Caco-2 (cell line): ENCODE measurements at regions of chr6 and their contacts with region 1.

Region 1: DNA sequence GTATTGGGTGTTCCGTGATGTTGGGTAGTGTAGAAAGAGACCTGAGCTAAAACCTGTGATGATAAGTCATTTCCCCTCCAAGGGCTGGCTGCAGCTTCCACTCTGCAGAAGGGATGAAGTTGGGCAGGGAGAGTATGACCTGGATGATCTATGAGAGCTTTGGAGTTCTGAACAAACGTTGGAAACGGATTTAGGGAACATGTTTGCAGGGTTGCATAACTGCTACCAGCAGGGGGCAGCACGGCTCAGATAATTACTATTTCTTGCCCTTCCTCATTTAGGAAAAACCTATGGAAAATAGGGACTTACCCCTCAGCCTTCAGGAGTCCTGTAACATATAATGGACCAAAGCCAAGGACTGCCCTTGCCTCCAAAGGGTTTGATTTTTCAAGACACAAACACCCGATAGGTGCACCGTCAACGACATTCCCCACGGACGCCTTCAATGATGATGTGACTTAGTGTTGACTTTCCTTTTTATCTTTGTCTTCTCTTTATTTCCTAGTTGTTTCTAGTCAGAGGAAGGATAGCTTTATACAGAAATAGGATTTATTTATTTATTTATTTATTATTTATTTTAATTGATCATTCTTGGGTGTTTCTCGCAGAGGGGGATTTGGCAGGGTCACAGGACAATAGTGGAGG is 164.9 kb upstream of the SASH1 start:
- DNase-seq: peak; percentile 45 to 69
- H3K4me3 ChIP-seq: no peak overlapping the region
- H3K4me3 Mint-ChIP-seq: no peak overlapping the region
- H3K27ac Mint-ChIP-seq: no peak overlapping the region
- H3K4me1 ChIP-seq: no peaks in the 10 kb centered on the region
- H3K4me1 Mint-ChIP-seq: no peaks in the 10 kb centered on the region
- H3K27me3 ChIP-seq: no peaks in the 10 kb centered on the region
- H3K27me3 Mint-ChIP-seq: no peaks in the 10 kb centered on the region
- CTCF ChIP-seq: peak; percentile 64 to 78

Region 2: DNA sequence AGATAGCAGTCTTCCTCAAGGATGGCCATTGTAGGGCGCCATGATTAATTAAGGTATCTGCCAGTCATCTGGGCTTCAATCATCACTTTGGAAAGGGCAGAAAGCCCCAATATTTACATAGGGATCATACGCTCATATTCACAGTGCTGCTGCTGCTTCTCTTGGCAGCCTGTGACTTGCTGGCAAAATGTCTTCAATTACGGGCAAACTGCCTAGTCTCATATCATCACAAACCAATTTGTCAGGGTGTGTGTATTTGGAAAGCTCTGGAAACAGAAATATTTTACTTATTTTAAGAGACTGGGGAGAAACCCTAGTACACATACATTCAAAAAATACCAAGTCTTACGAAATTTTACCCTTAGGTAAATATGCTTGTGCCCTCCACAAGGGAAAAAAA is 591.7 kb before region 1 on chr6:
- CTCF ChIA-PET with region 1: no interaction called
- POLR2A ChIA-PET with region 1: no interaction called
- intact Hi-C with region 1: no loop called
- DNase-seq: no peak
- H3K4me3 ChIP-seq: no peak overlapping the region
- H3K4me3 Mint-ChIP-seq: no peak overlapping the region
- H3K27ac Mint-ChIP-seq: no peak overlapping the region
- H3K4me1 ChIP-seq: no peaks in the 10 kb centered on the region
- H3K4me1 Mint-ChIP-seq: peaks cover 7% of the 10 kb centered on the region
- H3K27me3 ChIP-seq: no peaks in the 10 kb centered on the region
- H3K27me3 Mint-ChIP-seq: no peaks in the 10 kb centered on the region
- CTCF ChIP-seq: no peak

Region 3: DNA sequence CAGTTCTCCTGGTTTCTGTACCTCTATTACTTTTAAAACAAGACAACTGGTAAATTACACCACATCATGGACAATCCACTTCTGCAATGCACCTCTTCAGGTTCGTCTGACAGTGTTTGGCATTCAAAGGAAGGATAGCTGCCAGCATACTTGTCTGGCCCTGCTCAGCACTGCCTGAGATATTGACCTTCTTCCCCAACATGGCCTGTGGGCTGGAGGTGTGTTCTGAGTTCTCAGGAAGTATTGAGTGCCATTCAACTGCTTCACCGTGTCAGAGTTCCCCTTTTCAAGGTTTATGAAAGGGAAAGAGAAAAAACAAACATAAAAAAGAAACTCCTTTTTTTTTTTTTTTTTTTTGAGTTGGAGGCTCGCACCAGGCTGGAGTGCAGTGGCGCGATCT is 103.0 kb before region 1 on chr6:
- CTCF ChIA-PET with region 1: no interaction called
- POLR2A ChIA-PET with region 1: no interaction called
- intact Hi-C with region 1: no loop called
- DNase-seq: no peak
- H3K4me3 ChIP-seq: no peak overlapping the region
- H3K4me3 Mint-ChIP-seq: no peak overlapping the region
- H3K27ac Mint-ChIP-seq: no peak overlapping the region
- H3K4me1 ChIP-seq: no peaks in the 10 kb centered on the region
- H3K4me1 Mint-ChIP-seq: peaks cover 6% of the 10 kb centered on the region
- H3K27me3 ChIP-seq: no peaks in the 10 kb centered on the region
- H3K27me3 Mint-ChIP-seq: no peaks in the 10 kb centered on the region
- CTCF ChIP-seq: no peak

Region 4: DNA sequence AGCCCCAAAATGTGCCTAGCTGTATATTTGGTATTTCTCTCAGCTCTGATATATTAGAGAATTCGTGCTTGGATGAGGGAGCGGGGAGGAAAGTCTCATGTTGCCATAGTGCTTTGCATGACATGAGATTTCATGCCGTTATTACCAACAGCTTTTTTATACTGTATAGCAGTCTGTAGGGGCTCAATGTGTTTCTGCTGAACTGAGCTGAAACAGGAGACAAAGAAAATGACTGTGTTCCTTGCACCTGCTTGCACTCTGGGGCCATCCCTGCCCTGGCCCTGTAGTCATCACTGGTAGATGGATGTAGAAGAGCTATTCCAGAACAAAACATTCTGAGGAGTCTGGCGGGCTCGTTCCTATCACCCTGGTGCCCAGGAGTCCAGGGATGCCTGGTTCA is 37.0 kb after region 1 on chr6:
- CTCF ChIA-PET with region 1: no interaction called
- POLR2A ChIA-PET with region 1: no interaction called
- intact Hi-C with region 1: no loop called
- DNase-seq: no peak
- H3K4me3 ChIP-seq: no peak overlapping the region
- H3K4me3 Mint-ChIP-seq: no peak overlapping the region
- H3K27ac Mint-ChIP-seq: no peak overlapping the region
- H3K4me1 ChIP-seq: peaks cover 15% of the 10 kb centered on the region
- H3K4me1 Mint-ChIP-seq: peaks cover 9% of the 10 kb centered on the region
- H3K27me3 ChIP-seq: no peaks in the 10 kb centered on the region
- H3K27me3 Mint-ChIP-seq: no peaks in the 10 kb centered on the region
- CTCF ChIP-seq: no peak

Region 5: GRCh38 chr6:148231572-148231971 is 53.9 kb after region 1 on chr6:
- CTCF ChIA-PET with region 1: no interaction called
- POLR2A ChIA-PET with region 1: no interaction called
- intact Hi-C with region 1: no loop called
- DNase-seq: no peak
- H3K4me3 ChIP-seq: no peak overlapping the region
- H3K4me3 Mint-ChIP-seq: no peak overlapping the region
- H3K27ac Mint-ChIP-seq: no peak overlapping the region
- H3K4me1 ChIP-seq: no peaks in the 10 kb centered on the region
- H3K4me1 Mint-ChIP-seq: no peaks in the 10 kb centered on the region
- H3K27me3 ChIP-seq: no peaks in the 10 kb centered on the region
- H3K27me3 Mint-ChIP-seq: no peaks in the 10 kb centered on the region
- CTCF ChIP-seq: no peak

Region 6: GRCh38 chr6:148382861-148383260 is 205.2 kb after region 1 on chr6:
- CTCF ChIA-PET with region 1: no interaction called
- POLR2A ChIA-PET with region 1: no interaction called
- intact Hi-C with region 1: loop called (anchors 1 kb)
- DNase-seq: no peak
- H3K4me3 ChIP-seq: no peak overlapping the region
- H3K4me3 Mint-ChIP-seq: no peak overlapping the region
- H3K27ac Mint-ChIP-seq: no peak overlapping the region
- H3K4me1 ChIP-seq: no peaks in the 10 kb centered on the region
- H3K4me1 Mint-ChIP-seq: peaks cover 8% of the 10 kb centered on the region
- H3K27me3 ChIP-seq: no peaks in the 10 kb centered on the region
- H3K27me3 Mint-ChIP-seq: no peaks in the 10 kb centered on the region
- CTCF ChIP-seq: no peak

Region 7: GRCh38 chr6:148464319-148465010 is 286.8 kb after region 1 on chr6:
- CTCF ChIA-PET with region 1: interaction called, 3 read pairs
- POLR2A ChIA-PET with region 1: no interaction called
- intact Hi-C with region 1: loop called (anchors 1 kb)
- DNase-seq: peak; percentile 58 to 77
- H3K4me3 ChIP-seq: no peak overlapping the region
- H3K4me3 Mint-ChIP-seq: no peak overlapping the region
- H3K27ac Mint-ChIP-seq: peak overlapping the region; percentile 74
- H3K4me1 ChIP-seq: peaks cover 12% of the 10 kb centered on the region
- H3K4me1 Mint-ChIP-seq: peaks cover 13% of the 10 kb centered on the region
- H3K27me3 ChIP-seq: no peaks in the 10 kb centered on the region
- H3K27me3 Mint-ChIP-seq: no peaks in the 10 kb centered on the region
- CTCF ChIP-seq: peak; percentile 87 to 89